ENCODE measurements at regions of chr10 and their contacts with region 1.

Region 1: GRCh38 chr10:97792141-97792721 is 20.4 kb upstream of the SFRP5 start:
- DNase-seq: no peak
- H3K4me3 ChIP-seq: no peak overlapping the region
- H3K27ac ChIP-seq: no peak overlapping the region
- H3K4me1 ChIP-seq: peaks cover 8% of the 10 kb centered on the region
- H3K27me3 ChIP-seq: no peaks in the 10 kb centered on the region
- CTCF ChIP-seq: peak in 2 of 3 experiments; percentile 83
- POLR2A ChIP-seq: no peak

Region 2: DNA sequence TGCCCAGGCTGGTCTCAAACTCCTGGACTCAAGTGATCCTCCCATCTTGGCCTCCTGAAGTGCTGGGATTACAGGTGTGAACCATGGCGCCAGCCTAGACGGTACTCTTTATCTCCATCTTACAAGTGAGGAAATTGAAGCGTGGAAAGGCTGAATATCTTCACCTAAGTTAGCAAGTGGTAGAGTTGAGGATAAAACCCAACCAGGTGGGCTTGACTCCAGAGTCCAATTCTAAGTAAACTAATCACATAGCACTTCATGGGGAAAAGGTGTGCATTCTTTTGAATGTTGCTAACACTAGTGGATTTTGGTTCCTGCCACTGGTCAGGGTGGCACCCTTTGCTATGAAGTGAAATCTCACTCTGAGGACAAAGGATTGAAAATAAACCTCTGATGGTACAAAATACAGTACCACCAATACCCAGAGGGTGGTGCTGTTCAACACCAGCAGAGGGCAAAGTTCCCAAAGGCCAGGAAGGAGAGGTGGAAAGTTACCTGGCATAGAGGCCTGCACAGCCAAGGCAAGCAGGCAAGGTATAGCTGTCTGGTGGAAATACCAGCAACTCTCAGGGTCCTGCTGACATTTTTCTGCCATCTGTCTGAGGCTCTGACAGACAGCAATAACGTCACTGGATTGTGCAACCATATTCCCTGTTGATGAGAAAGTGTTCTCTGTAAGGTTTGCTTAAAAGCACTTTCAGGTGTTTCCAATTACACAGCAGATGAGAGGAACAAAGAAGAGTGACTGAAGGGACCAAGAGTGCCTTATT is 328.7 kb before region 1 on chr10:
- intact Hi-C with region 1: no loop called
- DNase-seq: no peak
- H3K4me3 ChIP-seq: no peak overlapping the region
- H3K27ac ChIP-seq: peak overlapping the region; percentile 76
- H3K4me1 ChIP-seq: peaks cover 30% of the 10 kb centered on the region
- H3K27me3 ChIP-seq: no peaks in the 10 kb centered on the region
- CTCF ChIP-seq: peak; percentile 61 to 85 (median 80)
- POLR2A ChIP-seq: no peak

Region 3: DNA sequence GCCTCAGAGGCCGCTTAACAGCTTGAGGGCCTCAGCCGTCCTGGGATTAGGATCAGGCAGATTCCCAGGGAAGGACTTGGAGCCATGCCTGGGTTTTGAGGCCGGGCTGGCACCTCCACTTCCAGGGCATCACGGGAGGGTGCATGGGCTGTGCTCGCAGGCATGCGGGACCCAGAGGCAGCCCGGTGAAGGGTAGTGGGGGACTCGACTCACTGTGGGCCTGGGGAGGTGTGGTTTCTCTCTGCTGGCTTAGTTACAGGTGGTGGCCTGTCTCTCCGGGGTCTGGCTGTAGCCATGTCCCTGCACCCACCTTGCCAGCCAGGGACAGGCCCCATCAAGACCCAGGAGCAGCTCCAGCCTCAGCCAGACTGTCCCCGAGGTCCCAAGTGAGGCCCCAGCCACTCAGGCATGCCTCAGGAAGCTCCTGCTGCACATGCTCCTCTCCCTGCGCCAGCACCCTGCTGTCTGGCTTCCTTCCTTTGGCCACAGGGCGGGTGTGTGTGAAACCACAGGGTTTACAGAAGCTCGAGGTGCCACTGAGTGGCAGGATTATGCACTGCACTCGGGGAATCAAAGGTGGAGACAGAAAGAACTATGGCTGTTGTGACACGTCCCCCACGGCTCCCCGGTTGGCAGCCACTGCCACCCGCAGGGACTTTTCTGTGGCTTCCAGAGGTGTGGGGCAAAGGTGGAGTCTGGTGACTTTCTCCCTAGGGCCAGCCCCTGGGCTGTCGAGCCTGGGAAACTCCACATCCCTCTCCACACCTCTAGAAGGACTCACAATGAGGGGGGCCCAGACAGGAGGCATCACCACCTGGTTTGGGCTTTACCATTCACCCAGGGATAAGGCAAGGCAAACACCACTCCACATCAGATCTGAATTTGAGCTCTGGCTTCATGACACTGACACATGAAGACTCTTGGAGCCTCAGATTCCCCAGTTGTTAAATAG is 77.1 kb after region 1 on chr10:
- intact Hi-C with region 1: loop called (anchors 10 kb)
- DNase-seq: no peak
- H3K4me3 ChIP-seq: no peak overlapping the region
- H3K27ac ChIP-seq: no peak overlapping the region
- H3K4me1 ChIP-seq: peaks cover 14% of the 10 kb centered on the region
- H3K27me3 ChIP-seq: no peaks in the 10 kb centered on the region
- CTCF ChIP-seq: peak; percentile 22 to 64 (median 53)
- POLR2A ChIP-seq: no peak

Region 4: DNA sequence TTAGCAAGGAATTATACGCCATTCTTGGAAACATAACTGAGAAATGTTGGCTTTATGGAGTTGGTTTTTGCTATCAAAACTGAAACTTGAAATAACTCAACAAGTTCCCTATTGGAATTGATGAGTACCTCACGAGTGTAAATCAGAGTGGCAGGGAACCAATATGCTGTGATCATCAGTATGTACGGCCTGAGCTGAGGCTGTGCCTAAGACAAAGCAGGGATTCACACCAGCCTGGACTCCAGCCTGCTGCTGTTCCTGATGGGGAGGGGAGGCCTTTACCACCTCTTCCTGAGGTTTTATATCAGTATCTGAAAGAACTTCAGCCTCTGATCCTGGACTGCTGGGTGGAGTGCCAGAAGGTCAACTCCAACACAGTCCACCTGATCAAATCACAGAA is 185.4 kb after region 1 on chr10:
- intact Hi-C with region 1: no loop called
- DNase-seq: no peak
- H3K4me3 ChIP-seq: no peak overlapping the region
- H3K27ac ChIP-seq: no peak overlapping the region
- H3K4me1 ChIP-seq: no peaks in the 10 kb centered on the region
- H3K27me3 ChIP-seq: no peaks in the 10 kb centered on the region
- CTCF ChIP-seq: no peak
- POLR2A ChIP-seq: no peak

Measured in vagina (tissue), 2 donors.